ENCODE measurements at regions of chr22 and their contacts with region 1.

Region 1: GRCh38 chr22:49917974-49918910 is at the starts of genes ALG12 and CRELD2:
- DNase-seq: peak; percentile 95
- H3K4me3 Mint-ChIP-seq: peak within 1 kb of the TSS; percentile 87
- H3K27ac Mint-ChIP-seq: peak within 1 kb of the TSS; percentile 83
- H3K4me1 Mint-ChIP-seq: peaks cover 17% of the 10 kb centered on the region
- H3K27me3 Mint-ChIP-seq: no peaks in the 10 kb centered on the region
- total RNA-seq, gene ALG12: 15.5 and 16.5 TPM in 2 replicates
- total RNA-seq, gene CRELD2: 49.9 and 52.9 TPM in 2 replicates

Region 2: GRCh38 chr22:49767355-49768062 is 150.7 kb before region 1 on chr22:
- intact Hi-C with region 1: loop called (anchors 5 kb)
- DNase-seq: no peak
- H3K4me3 Mint-ChIP-seq: no peak overlapping the region
- H3K27ac Mint-ChIP-seq: no peak overlapping the region
- H3K4me1 Mint-ChIP-seq: peaks cover 5% of the 10 kb centered on the region
- H3K27me3 Mint-ChIP-seq: no peaks in the 10 kb centered on the region

Region 3: GRCh38 chr22:49852898-49853894 is 65.0 kb before region 1 on chr22 and contains the start of gene ZBED4:
- intact Hi-C with region 1: loop called (anchors 2 kb)
- DNase-seq: peak; percentile 99
- H3K4me3 Mint-ChIP-seq: peak within 1 kb of the TSS; percentile 93
- H3K27ac Mint-ChIP-seq: peak within 1 kb of the TSS; percentile 96
- H3K4me1 Mint-ChIP-seq: peaks cover 40% of the 10 kb centered on the region
- H3K27me3 Mint-ChIP-seq: peaks cover 5% of the 10 kb centered on the region
- total RNA-seq, gene ZBED4: 25.2 and 25.6 TPM in 2 replicates

Region 4: DNA sequence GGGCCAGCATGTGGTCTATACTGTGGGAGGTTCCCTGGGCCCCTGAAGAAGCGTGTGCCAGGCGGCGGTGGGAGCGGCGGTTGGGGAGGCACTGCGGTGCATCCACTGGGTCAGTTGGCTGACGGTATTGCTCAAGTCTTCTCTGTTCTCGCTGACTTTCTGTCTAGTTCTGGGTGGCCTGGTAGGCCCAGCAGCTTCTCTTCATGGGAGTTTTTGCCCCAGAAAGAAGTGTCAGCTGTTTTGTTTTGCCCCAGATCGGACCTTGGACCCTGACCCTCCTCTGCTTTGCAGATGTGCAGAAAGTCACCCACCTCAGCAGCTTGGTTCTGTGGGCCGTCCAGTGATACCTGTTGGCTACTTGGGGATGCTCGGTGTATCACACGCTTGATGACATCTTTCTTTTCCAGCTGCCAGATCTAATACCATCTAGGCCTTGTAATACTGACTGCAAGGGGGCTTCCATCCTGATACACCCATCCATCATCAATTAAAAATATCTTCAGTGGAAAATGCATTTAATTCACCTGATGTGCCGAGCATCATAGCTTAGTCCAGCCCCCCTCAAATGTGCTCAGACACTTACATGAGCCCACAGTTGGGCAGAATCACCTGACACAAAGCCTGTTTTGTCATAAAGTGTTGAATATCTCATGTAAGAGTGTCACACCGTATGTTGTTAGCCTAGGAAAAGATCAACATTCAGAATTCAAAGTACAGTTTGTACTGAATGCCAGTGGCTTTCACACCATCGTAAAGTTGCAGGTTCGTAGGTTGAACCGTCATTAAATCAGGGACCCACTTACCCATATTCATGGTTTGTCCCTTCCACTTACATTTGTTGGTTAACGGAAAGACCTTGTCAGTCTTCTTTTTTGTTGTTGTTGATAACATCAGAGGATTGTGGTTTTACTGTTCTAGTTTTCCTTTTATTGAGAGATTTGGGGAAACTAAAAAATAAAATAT is 50.7 kb before region 1 on chr22:
- intact Hi-C with region 1: loop called (anchors 5 kb)
- DNase-seq: no peak
- H3K4me3 Mint-ChIP-seq: peak overlapping the region; percentile 42
- H3K27ac Mint-ChIP-seq: peak overlapping the region; percentile 91
- H3K4me1 Mint-ChIP-seq: peaks cover 57% of the 10 kb centered on the region
- H3K27me3 Mint-ChIP-seq: no peaks in the 10 kb centered on the region

Region 5: GRCh38 chr22:49960159-49961004 is 42.1 kb after region 1 on chr22 and contains the start of gene PIM3:
- intact Hi-C with region 1: loop called (anchors 1 kb)
- DNase-seq: peak; percentile 91
- H3K4me3 Mint-ChIP-seq: peak within 1 kb of the TSS; percentile 90
- H3K27ac Mint-ChIP-seq: peak within 1 kb of the TSS; percentile 91
- H3K4me1 Mint-ChIP-seq: peaks cover 15% of the 10 kb centered on the region
- H3K27me3 Mint-ChIP-seq: no peaks in the 10 kb centered on the region
- total RNA-seq, gene PIM3: 215 TPM in 2 replicates

Measured in activated T-helper 2 cell treated with anti-CD3 and anti-CD28 coated beads, Interferon-gamma antibody, Interleukin-2, Interleukin-4, amounts not matched to agents 10 μg/mL and 5 μg/mL and 100 μg/mL, durations not matched to agents 14 hours and 24 hours and 36 hours (primary cell).